Mammary epithelial cell (primary cell): ENCODE measurements at regions of chr3 and their contacts with region 1.

Region 1: GRCh38 chr3:142844339-142844977 is 44.4 kb downstream of the PCOLCE2 start:
- DNase-seq: peak; percentile 67
- H3K4me3 ChIP-seq: no peak overlapping the region
- H3K27ac ChIP-seq: no peak overlapping the region
- H3K4me1 ChIP-seq: no peaks in the 10 kb centered on the region
- H3K27me3 ChIP-seq: no peaks in the 10 kb centered on the region
- CTCF ChIP-seq: peak; percentile 54 to 70

Region 2: DNA sequence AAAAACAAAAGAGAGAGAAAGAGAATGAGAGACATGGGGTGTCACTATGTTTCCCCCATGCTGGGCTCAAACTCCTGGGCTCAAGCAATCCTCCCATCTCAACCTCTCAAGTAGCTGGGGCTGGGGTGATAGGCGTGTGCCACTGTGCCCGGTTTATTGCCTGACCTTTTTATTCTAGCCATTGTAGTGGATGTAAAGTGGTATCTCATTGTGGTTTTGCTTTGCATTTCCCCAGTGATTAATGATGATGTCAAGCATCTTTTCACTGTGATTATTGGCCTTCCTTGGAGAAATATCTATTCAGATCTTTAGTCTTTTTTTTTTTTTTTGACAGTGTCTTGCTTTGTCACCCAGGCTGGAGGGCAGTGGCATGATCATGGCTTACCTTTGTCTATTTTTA is 581.3 kb before region 1 on chr3:
- CTCF ChIA-PET with region 1: no interaction called
- dilution Hi-C with region 1: no loop called
- in situ Hi-C with region 1: no loop called
- intact Hi-C with region 1: no loop called
- DNase-seq: peak; percentile 71
- H3K4me3 ChIP-seq: no peak overlapping the region
- H3K27ac ChIP-seq: no peak overlapping the region
- H3K4me1 ChIP-seq: no peaks in the 10 kb centered on the region
- H3K27me3 ChIP-seq: no peaks in the 10 kb centered on the region
- CTCF ChIP-seq: no peak

Region 3: GRCh38 chr3:142904639-142905436 is 60.4 kb after region 1 on chr3:
- CTCF ChIA-PET with region 1: interaction called, 4 read pairs
- dilution Hi-C with region 1: no loop called
- in situ Hi-C with region 1: no loop called
- intact Hi-C with region 1: loop called (anchors 1 kb)
- DNase-seq: peak; percentile 71
- H3K4me3 ChIP-seq: no peak overlapping the region
- H3K27ac ChIP-seq: no peak overlapping the region
- H3K4me1 ChIP-seq: peaks cover 3% of the 10 kb centered on the region
- H3K27me3 ChIP-seq: no peaks in the 10 kb centered on the region
- CTCF ChIP-seq: peak in 1 of 2 donors; percentile 33